ENCODE measurements at regions of chr19 and their contacts with region 1.

Region 1: GRCh38 chr19:38335949-38336637 is 463 bp downstream of the CATSPERG start:
- DNase-seq: peak; percentile 98 to 99
- H3K4me3 ChIP-seq: peak overlapping the region; percentile 93
- H3K4me3 Mint-ChIP-seq: peak overlapping the region; percentile 93
- H3K27ac Mint-ChIP-seq: peak overlapping the region; percentile 73
- H3K4me1 ChIP-seq: peaks cover 21% of the 10 kb centered on the region
- H3K4me1 Mint-ChIP-seq: peaks cover 7% of the 10 kb centered on the region
- H3K27me3 ChIP-seq: no peaks in the 10 kb centered on the region
- H3K27me3 Mint-ChIP-seq: no peaks in the 10 kb centered on the region
- CTCF ChIP-seq: no peak

Region 2: GRCh38 chr19:37941782-37942515 is 394.1 kb before region 1 on chr19:
- CTCF ChIA-PET with region 1: no interaction called
- POLR2A ChIA-PET with region 1: no interaction called
- intact Hi-C with region 1: loop called (anchors 1 kb)
- DNase-seq: peak; percentile 91 to 94
- H3K4me3 ChIP-seq: no peak overlapping the region
- H3K4me3 Mint-ChIP-seq: peak overlapping the region; percentile 68
- H3K27ac Mint-ChIP-seq: peak overlapping the region; percentile 94
- H3K4me1 ChIP-seq: peaks cover 68% of the 10 kb centered on the region
- H3K4me1 Mint-ChIP-seq: peaks cover 51% of the 10 kb centered on the region
- H3K27me3 ChIP-seq: no peaks in the 10 kb centered on the region
- H3K27me3 Mint-ChIP-seq: no peaks in the 10 kb centered on the region
- CTCF ChIP-seq: no peak

Region 3: GRCh38 chr19:38245826-38246498 is 90.1 kb before region 1 on chr19:
- CTCF ChIA-PET with region 1: interaction called, 9 read pairs
- POLR2A ChIA-PET with region 1: interaction called, 3 read pairs
- intact Hi-C with region 1: loop called (anchors 1 kb)
- DNase-seq: no peak
- H3K4me3 ChIP-seq: no peak overlapping the region
- H3K4me3 Mint-ChIP-seq: no peak overlapping the region
- H3K27ac Mint-ChIP-seq: peak overlapping the region; percentile 45
- H3K4me1 ChIP-seq: peaks cover 17% of the 10 kb centered on the region
- H3K4me1 Mint-ChIP-seq: peaks cover 28% of the 10 kb centered on the region
- H3K27me3 ChIP-seq: no peaks in the 10 kb centered on the region
- H3K27me3 Mint-ChIP-seq: no peaks in the 10 kb centered on the region
- CTCF ChIP-seq: no peak

Region 4: GRCh38 chr19:38315657-38316476 is 20.2 kb before region 1 on chr19 and contains the start of gene YIF1B:
- CTCF ChIA-PET with region 1: interaction called, 3 read pairs
- POLR2A ChIA-PET with region 1: no interaction called
- intact Hi-C with region 1: loop called (anchors 1 kb)
- DNase-seq: peak; percentile 98 to 99
- H3K4me3 ChIP-seq: peak within 1 kb of the TSS; percentile 61
- H3K4me3 Mint-ChIP-seq: peak within 1 kb of the TSS; percentile 96
- H3K27ac Mint-ChIP-seq: peak within 1 kb of the TSS; percentile 91
- H3K4me1 ChIP-seq: peaks cover 4% of the 10 kb centered on the region; the same call in 1 of the 2 replicates
- H3K4me1 Mint-ChIP-seq: peaks cover 11% of the 10 kb centered on the region
- H3K27me3 ChIP-seq: no peaks in the 10 kb centered on the region
- H3K27me3 Mint-ChIP-seq: no peaks in the 10 kb centered on the region
- CTCF ChIP-seq: no peak
- total RNA-seq, gene YIF1B: 61.7 and 66.7 TPM in 2 replicates

Region 5: GRCh38 chr19:38374429-38375176 is 38.5 kb after region 1 on chr19 and contains the start of gene PSMD8:
- CTCF ChIA-PET with region 1: interaction called, 7 read pairs
- POLR2A ChIA-PET with region 1: interaction called, 6 read pairs
- intact Hi-C with region 1: loop called (anchors 1 kb)
- DNase-seq: peak; percentile 99
- H3K4me3 ChIP-seq: peak within 1 kb of the TSS; percentile 95
- H3K4me3 Mint-ChIP-seq: peak within 1 kb of the TSS; percentile 90
- H3K27ac Mint-ChIP-seq: peak within 1 kb of the TSS; percentile 92
- H3K4me1 ChIP-seq: 0 out of 2 replicates have a peak, but pooled peaks cover 4% of the 10 kb centered on the region
- H3K4me1 Mint-ChIP-seq: peaks cover 12% of the 10 kb centered on the region
- H3K27me3 ChIP-seq: no peaks in the 10 kb centered on the region
- H3K27me3 Mint-ChIP-seq: no peaks in the 10 kb centered on the region
- CTCF ChIP-seq: peak in 1 of 2 experiments; percentile 48
- total RNA-seq, gene PSMD8: 264 and 274 TPM in 2 replicates